Activated naive CD4-positive, alpha-beta T cell treated with anti-CD3 and anti-CD28 coated beads for 36 hours (primary cell): ENCODE measurements at regions of chr5 and their contacts with region 1.

Region 1: GRCh38 chr5:173451031-173451430 is 122.8 kb upstream of the STC2 start:
- DNase-seq: peak; percentile 13
- H3K4me3 Mint-ChIP-seq: no peak overlapping the region
- H3K27ac Mint-ChIP-seq: no peak overlapping the region
- H3K4me1 Mint-ChIP-seq: no peaks in the 10 kb centered on the region
- H3K27me3 Mint-ChIP-seq: no peaks in the 10 kb centered on the region

Region 2: DNA sequence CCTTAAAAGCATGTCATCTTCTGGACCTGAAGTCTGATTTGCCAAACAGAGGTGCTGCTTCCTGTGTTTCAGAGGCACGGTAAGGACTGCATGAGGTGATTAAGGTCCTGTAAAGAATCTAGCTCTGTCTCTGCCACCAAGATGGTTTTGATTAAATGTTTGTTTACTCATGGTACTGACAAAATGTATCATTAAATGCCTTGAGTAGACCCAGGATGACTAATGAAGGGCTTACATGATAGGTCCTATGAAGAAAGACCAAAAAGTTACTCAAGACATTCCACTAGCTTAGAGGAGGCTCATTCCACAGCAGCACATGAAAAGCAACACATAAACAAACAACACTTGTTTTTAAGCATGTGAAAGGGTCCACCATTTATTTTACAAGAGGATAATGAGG is 64.5 kb after region 1 on chr5:
- CTCF ChIA-PET with region 1: no interaction called
- intact Hi-C with region 1: no loop called
- DNase-seq: no peak
- H3K4me3 Mint-ChIP-seq: no peak overlapping the region
- H3K27ac Mint-ChIP-seq: no peak overlapping the region
- H3K4me1 Mint-ChIP-seq: no peaks in the 10 kb centered on the region
- H3K27me3 Mint-ChIP-seq: peaks cover 22% of the 10 kb centered on the region

Region 3: GRCh38 chr5:173573126-173573960 is 122.3 kb after region 1 on chr5:
- CTCF ChIA-PET with region 1: interaction called, 5 read pairs
- intact Hi-C with region 1: loop called (anchors 1 kb)
- DNase-seq: peak; percentile 70
- H3K4me3 Mint-ChIP-seq: no peak overlapping the region
- H3K27ac Mint-ChIP-seq: no peak overlapping the region
- H3K4me1 Mint-ChIP-seq: peaks cover 6% of the 10 kb centered on the region
- H3K27me3 Mint-ChIP-seq: peaks cover 13% of the 10 kb centered on the region